Activated naive CD4-positive, alpha-beta T cell treated with anti-CD3 and anti-CD28 coated beads for 36 hours (primary cell): ENCODE measurements at regions of chr1 and their contacts with region 1.

Region 1: DNA sequence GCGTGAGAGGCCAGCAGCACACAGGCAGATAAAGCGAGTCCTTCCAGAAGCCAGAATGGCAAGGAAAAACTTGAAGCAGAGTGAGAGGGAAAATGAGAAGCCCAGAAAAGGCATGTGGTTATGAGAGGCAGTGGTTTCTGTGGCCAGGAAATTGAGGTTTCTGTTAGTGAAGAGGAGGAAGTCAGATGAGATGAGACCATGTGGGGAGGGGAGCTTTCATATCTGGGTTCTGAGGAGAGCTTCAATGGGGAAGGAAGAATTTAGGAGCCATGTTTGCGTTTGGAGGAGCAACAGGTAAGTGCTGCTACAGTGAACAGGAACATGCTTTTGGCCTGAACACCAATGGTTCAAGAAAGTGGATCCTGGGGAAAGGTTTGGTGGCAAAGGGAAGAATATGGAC is 6.1 kb upstream of the CD1A start:
- DNase-seq: peak; percentile 55
- H3K4me3 Mint-ChIP-seq: no peak overlapping the region
- H3K27ac Mint-ChIP-seq: no peak overlapping the region
- H3K4me1 Mint-ChIP-seq: peaks cover 19% of the 10 kb centered on the region
- H3K27me3 Mint-ChIP-seq: peaks cover 45% of the 10 kb centered on the region

Region 2: DNA sequence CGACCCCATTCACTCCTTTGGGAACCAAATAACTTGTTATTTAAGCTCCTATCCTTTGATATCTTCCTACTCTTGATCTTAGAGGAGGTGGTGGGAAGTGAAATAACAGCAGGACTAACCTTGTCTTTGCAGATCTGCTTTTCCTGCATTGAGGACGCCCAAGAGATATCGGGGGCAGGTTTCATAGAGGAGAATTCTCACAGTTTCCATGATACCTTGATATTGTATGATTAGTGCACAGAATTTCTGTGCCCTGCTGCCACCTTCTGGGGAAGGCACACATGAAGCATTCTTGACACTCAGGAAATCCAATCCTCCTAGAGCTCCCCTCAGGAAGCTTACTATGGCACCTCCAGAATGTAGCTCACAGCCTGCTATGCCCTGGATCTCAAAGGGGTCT is 81.6 kb after region 1 on chr1:
- CTCF ChIA-PET with region 1: interaction called, 5 read pairs
- intact Hi-C with region 1: loop called (anchors 5 kb)
- DNase-seq: peak; percentile 17
- H3K4me3 Mint-ChIP-seq: no peak overlapping the region
- H3K27ac Mint-ChIP-seq: no peak overlapping the region
- H3K4me1 Mint-ChIP-seq: no peaks in the 10 kb centered on the region
- H3K27me3 Mint-ChIP-seq: peaks cover 18% of the 10 kb centered on the region

Region 3: DNA sequence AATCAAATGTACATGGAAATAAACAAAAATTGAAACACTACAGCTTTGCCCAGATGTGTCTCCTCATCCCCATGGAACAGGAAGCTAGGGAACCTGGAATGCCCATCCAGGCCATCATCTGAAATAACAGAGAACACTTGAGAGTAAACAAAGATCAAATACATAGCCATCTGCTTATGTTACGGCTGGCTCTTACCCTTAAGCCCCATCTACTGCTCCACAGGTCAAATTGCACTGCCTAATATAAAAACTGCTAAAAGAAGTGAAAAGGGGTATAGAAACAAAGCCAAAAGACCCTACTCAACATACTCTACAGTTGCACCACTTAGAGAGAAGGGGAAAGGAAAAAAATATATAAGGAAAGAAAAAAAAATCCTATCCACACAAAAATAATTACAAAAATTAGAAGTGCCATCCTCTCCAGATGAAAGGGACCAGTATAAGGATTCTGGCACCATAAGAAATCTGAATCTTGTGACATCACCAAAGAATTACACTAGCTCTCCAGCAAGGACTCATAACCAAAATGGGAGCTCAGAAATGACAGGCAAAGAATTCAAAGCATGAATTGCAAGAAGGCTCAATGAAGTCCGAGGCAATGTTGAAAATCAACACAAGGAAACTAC is 279.2 kb after region 1 on chr1:
- CTCF ChIA-PET with region 1: no interaction called
- intact Hi-C with region 1: loop called (anchors 2 kb)
- DNase-seq: no peak
- H3K4me3 Mint-ChIP-seq: no peak overlapping the region
- H3K27ac Mint-ChIP-seq: no peak overlapping the region
- H3K4me1 Mint-ChIP-seq: no peaks in the 10 kb centered on the region
- H3K27me3 Mint-ChIP-seq: peaks cover 31% of the 10 kb centered on the region